ENCODE measurements at regions of chr1 and their contacts with region 1.

Region 1: GRCh38 chr1:23496490-23497181 is 12.7 kb upstream of the ASAP3 start:
- DNase-seq: no peak
- ATAC-seq: peak; percentile 55 to 70; a peak in 5 of 6 replicates
- H3K4me3 ChIP-seq: no peak overlapping the region
- H3K27ac ChIP-seq: no peak overlapping the region
- H3K4me1 ChIP-seq: no peaks in the 10 kb centered on the region
- CTCF ChIP-seq: no peak
- EP300 ChIP-seq: no peak
- POLR2A ChIP-seq: no peak
- RAD21 ChIP-seq: no peak

Region 2: DNA sequence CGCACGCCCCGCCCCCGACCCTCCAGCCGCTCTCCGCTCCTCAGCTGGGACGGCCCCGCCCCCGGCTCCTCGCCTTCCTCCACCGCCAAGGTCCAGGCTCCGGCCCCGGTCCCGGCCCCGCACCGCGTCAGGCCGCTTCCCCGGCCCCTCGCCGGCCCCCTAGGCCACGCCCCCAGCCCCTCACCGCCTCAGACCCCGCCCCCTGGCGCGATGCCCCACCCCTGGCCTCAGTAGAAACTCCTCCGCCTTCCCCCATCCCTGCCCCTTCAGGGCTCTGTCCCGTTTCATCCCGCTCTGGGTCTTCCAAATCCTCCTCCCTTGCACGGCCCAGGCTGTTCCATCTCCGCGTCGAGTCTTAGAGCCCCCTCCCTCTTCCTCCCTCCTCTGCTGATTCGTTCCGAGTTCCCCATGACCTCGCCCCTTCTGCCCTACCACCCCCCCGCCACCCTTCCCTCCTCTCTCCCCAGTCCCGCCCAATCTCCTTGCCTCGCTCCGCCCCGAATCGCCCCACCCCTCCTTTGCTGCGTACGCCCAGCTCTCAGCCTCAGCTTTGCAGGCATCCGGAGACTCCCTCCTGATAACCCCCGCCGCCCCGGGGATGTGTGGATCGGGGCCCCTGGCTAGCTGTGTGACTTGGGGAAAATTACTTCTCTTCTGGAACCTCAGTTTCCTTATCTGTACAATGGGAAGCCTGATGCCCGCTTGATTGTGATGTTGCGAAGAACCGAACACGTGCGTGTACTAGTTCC is 12.2 kb before region 1 on chr1:
- CTCF ChIA-PET with region 1: interaction called, 38 read pairs
- POLR2A ChIA-PET with region 1: interaction called, 7 read pairs
- DNase-seq: peak; percentile 82 to 88
- ATAC-seq: peak; percentile 91 to 95
- H3K4me3 ChIP-seq: peak overlapping the region; percentile 81
- H3K27ac ChIP-seq: peak overlapping the region; percentile 68 to 89
- H3K4me1 ChIP-seq: peaks cover 8% of the 10 kb centered on the region
- CTCF ChIP-seq: no peak
- EP300 ChIP-seq: no peak
- POLR2A ChIP-seq: no peak
- RAD21 ChIP-seq: no peak

Region 3: DNA sequence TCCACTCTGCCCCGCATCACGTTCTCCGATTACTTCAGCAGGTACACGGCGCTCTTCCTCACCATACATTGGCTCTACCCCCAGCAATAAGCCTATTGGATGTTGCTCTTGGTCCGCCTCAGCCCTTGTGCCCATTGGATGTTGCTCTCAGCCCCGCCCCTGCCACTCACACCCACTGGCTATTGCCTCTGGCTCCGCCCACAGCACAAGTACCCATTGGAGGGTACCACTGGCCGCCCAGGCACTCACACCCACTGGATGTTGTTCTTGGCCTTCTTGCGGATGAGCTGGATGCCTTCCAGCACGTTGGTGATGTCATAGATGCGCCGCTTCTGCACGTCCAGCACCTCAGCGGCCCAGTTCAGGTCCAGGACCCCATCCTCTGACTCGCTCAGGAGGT is 25.0 kb after region 1 on chr1:
- CTCF ChIA-PET with region 1: interaction called, 70 read pairs
- POLR2A ChIA-PET with region 1: no interaction called
- DNase-seq: peak; percentile 31 to 42
- ATAC-seq: peak; percentile 49 to 84; a peak in 3 of 6 replicates
- H3K4me3 ChIP-seq: no peak overlapping the region
- H3K27ac ChIP-seq: no peak overlapping the region
- H3K4me1 ChIP-seq: peaks cover 24% of the 10 kb centered on the region
- CTCF ChIP-seq: no peak
- EP300 ChIP-seq: no peak
- POLR2A ChIP-seq: no peak
- RAD21 ChIP-seq: no peak

Region 4: GRCh38 chr1:23539698-23540266 is 43.1 kb after region 1 on chr1:
- CTCF ChIA-PET with region 1: interaction called, 101 read pairs
- POLR2A ChIA-PET with region 1: interaction called, 3 read pairs
- DNase-seq: peak; percentile 91 to 92
- ATAC-seq: peak; percentile 93 to 98
- H3K4me3 ChIP-seq: no peak overlapping the region
- H3K27ac ChIP-seq: peak overlapping the region; percentile 56 to 77
- H3K4me1 ChIP-seq: peaks cover 15% of the 10 kb centered on the region
- CTCF ChIP-seq: peak; percentile 81
- EP300 ChIP-seq: no peak
- POLR2A ChIP-seq: no peak
- RAD21 ChIP-seq: peak; percentile 92 to 95

Measured in A549 (cell line).